ENCODE measurements at regions of chr10 and their contacts with region 1.

Region 1: GRCh38 chr10:62502995-62503613 is 128.9 kb downstream of the ZNF365 start:
- DNase-seq: no peak
- H3K4me3 ChIP-seq: no peak overlapping the region
- CTCF ChIP-seq: no peak

Region 2: DNA sequence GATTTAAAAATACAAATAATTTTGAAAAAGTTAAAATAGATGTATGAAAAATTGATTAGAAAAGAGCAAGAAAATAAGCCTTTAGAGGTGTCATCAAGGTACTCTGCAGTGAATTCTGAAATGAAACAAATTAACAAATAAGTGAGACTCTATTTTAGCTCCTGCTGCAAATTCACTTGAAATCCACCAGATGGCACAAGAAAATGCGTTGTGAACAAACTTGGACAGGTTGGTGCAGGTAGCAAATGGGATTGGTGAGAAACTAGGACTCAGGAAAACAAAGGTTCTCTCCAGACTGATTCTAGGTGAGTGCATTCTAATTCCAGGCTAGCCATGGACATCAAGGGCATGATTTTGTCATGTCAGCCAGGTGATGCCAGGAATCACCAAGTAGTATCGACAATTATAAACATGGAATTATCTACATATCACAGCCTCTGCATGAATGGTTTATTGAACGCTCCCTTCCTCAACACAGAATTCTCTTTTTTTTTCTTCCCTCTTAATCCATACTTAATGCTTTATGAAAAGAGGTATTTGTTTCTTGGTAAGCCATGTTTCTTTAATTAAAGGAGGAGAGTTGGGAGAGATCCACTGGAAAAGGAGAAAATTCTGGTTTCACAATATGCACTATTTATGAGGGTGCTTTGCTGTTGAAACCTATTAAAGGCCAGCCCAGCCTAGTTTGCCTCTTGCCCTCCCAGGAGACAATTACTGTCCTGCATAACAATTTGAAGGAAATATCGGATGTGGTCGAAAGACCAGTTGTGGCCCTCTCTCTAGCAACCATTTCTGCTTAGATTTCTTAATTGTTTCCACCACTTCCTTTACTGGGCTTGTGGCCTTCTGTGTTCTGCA is 10.9 kb before region 1 on chr10:
- CTCF ChIA-PET with region 1: interaction called, 13 read pairs
- POLR2A ChIA-PET with region 1: no interaction called
- DNase-seq: no peak
- H3K4me3 ChIP-seq: no peak overlapping the region
- CTCF ChIP-seq: peak; percentile 29

Region 3: DNA sequence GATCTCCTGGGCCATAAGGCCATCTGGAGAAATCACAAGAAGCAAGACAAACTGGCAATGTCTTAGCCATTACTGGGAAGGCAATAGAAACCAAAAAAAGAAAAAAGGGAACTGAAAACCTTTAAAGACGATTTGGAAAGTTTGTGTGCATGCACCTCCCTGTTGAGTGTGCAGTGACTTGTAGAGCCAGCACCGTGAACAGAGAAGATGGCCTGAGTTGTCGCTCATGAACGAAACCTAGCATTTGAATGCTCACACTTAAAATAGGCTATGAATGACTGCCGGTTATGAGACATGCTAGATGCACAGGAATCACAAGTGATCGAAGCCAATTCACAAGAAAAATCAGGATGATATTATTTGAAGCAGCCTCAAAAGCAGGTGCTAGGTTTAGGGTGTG is 150.2 kb after region 1 on chr10:
- CTCF ChIA-PET with region 1: no interaction called
- POLR2A ChIA-PET with region 1: no interaction called
- DNase-seq: no peak
- H3K4me3 ChIP-seq: no peak overlapping the region
- CTCF ChIP-seq: no peak

Measured in AG04449 (cell line).